Prostate gland (tissue), 2 donors: ENCODE measurements at regions of chr2 and their contacts with region 1.

Region 1: DNA sequence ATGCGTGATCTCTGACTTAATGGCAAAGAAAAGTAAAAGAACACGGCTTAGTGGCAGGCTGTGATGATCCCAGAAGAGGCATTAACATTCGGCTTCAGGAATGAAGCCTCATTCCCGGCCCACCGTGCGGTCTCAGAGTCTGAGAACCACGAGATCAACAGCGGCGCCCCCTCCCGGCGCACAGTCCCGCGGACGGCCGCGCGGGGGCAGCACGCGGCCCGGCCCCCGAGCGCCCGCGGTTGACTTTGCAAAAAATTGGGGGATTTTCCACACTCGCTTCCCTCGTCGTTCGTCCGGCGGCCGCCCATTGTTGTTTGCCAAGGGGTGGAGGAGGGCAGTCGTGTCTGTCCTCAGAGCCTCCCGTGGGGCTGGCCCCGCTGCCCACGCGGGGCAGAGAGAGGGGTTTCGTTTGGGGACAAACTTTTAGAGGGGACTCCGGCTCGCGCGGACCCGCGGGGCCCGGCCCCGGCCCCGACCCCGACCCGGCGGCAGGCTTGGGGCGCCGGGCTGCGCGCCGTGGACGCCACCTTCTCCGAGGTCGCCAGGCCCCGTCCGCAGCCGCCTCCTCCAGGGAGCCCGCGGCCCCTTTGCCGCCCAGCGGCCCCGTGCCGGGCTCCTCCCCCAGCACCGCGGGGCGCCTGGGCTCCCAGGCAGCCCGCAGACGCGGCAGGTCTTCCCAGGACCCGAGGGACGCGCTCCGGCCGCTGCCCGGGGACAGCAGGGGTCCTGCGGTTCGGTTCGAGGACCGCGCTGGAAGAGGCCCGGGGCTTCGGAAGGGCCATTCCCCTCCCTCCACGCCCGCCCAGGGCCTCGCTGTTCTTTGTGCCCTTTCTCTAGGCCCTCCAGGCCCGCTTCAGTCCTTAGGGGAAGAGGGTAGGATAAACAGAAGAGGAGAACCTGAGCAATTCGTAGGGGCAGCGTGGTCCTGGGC is 3.4 kb upstream of the HS6ST1 start:
- DNase-seq: peak; percentile 81
- H3K4me3 ChIP-seq: peak overlapping the region; percentile 45 to 51
- H3K27ac ChIP-seq: peak overlapping the region; percentile 75 to 83
- H3K4me1 ChIP-seq: peaks cover 6% of the 10 kb centered on the region
- H3K27me3 ChIP-seq: no peaks in the 10 kb centered on the region
- CTCF ChIP-seq: peak; percentile 98 to 99 (median 99)
- POLR2A ChIP-seq: peak; percentile 49

Region 2: DNA sequence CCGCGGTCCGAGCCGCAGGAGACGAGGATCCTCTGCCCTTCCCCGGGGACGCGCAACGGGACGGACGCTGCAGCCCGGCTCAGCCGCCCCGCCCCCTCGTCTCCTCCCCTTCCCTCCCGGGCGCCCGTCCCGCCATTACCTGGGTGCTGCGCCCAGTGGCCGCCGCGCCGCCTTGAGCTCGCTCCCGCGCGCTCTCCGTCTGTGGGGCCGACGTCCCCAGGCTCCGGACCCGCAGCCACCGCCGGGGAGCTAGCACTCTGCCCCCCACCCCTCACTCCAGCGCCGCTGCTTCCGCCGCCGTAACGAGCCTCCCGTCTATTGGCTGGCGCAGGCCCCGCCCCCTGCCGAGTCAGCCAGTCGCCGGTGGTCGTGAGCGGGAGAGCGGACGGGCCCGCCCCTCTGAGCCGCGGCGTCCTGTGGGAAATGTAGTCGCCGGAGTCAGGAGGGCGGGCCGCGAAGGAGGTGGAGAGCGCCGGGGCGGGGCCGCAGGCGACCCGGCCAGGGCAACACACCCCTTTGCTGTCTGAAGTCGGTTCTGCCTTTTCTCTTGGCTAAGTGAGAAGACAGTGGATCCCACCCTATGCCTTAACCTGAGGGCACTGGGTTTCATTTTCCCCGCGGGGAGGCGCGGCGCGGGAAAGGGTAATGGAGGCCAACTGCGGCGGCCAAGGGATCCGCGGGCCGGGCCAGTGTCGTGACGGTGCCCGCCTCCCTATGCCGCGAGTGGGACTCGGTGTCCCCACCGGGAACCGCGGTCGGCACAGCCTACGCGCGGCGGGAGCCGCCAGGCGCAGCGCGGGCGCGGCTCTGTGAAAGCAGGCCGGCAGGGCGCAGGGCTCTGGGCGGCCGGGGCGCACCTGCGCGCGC is 294.0 kb before region 1 on chr2 and contains the start of gene SAP130:
- intact Hi-C with region 1: loop called (anchors 5 kb)
- DNase-seq: peak; percentile 98
- H3K4me3 ChIP-seq: peak within 1 kb of the TSS; percentile 98 to 100
- H3K27ac ChIP-seq: peak within 1 kb of the TSS; percentile 98 to 99
- H3K4me1 ChIP-seq: no peaks in the 10 kb centered on the region
- H3K27me3 ChIP-seq: no peaks in the 10 kb centered on the region
- CTCF ChIP-seq: peak in 1 of 4 experiments; percentile 7
- POLR2A ChIP-seq: peak; percentile 60
- total RNA-seq, gene SAP130: 21.9 to 55.4 TPM

Region 3: GRCh38 chr2:128379021-128380015 is 57.3 kb after region 1 on chr2:
- intact Hi-C with region 1: loop called (anchors 2 kb)
- DNase-seq: peak; percentile 82
- H3K4me3 ChIP-seq: no peak overlapping the region
- H3K27ac ChIP-seq: peak overlapping the region; percentile 38 to 70
- H3K4me1 ChIP-seq: peaks cover 25% of the 10 kb centered on the region
- H3K27me3 ChIP-seq: no peaks in the 10 kb centered on the region
- CTCF ChIP-seq: no peak
- POLR2A ChIP-seq: no peak

Region 4: DNA sequence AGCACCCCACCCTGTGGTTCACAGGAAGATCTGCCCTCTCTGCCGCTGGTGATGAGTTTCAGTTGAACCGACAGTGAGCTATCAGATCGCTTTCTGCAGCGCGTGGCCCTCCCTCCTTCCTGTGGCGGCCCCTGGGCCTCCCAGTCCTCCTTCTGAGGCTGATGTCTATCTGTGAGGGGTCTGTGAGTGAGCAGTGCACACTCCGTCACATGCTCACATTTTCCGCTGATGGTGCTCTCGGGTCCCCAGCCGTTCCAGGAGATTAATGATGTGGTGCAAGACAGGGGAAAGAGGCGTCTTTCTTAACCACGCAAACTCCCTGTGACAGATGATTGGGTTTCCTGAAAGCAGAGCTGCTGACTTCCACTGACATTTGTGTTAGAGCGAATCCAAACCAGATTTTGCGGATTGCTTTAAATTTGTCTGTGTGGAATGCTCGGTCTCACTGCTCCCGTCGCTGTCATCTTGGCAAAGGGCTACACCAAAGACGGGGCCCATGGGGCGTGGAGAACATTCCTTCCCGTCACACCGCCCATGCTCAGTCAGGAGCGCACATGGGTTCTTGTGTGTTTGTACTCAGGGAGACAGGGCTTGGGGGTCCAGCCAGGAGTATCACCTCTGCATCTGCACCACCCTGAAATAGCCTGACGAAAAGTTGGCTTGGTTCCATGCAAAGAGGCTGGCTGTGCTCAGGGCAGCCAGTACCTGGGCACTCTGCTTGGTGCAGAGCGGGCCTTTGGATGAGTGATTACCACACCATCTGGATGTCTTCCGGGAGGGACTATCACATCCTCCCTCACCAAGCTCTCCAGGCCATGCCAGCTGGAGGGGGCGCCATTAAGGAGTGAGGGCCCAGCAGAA is 151.4 kb after region 1 on chr2:
- intact Hi-C with region 1: loop called (anchors 5 kb)
- DNase-seq: peak; percentile 42
- H3K4me3 ChIP-seq: no peak overlapping the region
- H3K27ac ChIP-seq: no peak overlapping the region
- H3K4me1 ChIP-seq: no peaks in the 10 kb centered on the region
- H3K27me3 ChIP-seq: no peaks in the 10 kb centered on the region
- CTCF ChIP-seq: no peak
- POLR2A ChIP-seq: no peak

Region 5: DNA sequence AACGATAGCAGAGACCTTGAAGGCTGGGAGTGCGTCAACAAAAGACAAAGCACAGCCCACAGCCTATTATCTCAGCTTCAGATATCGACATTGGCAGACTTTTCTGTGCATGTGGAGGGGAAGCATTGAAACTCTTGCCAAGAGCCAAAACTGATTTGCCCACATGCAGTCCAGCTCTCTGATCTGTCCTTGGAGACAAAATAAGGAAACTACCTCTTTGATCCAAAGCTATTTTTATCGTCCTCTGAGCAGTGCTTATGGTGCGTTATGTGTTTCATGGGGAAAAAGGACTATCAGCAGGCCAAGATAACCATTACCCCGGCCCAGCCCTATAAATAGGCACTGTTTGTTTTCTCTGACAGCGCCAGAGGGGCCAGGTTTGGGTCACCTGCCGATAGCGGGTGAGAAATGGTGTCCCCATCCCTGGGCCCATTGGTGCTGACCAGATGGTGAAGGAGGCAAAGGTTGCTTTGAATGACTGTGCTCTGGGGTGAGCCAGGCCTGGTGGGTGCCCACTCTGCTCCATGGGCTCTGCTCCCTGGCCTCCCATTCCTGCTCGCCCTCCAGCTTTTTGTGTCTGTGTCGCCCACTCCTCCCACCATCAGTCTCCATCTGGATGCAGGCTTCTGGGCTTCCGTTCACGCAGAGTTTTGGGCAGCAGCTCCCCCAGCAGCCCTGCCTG is 172.7 kb after region 1 on chr2:
- intact Hi-C with region 1: no loop called
- DNase-seq: no peak
- H3K4me3 ChIP-seq: no peak overlapping the region
- H3K27ac ChIP-seq: no peak overlapping the region
- H3K4me1 ChIP-seq: no peaks in the 10 kb centered on the region
- H3K27me3 ChIP-seq: no peaks in the 10 kb centered on the region
- CTCF ChIP-seq: no peak
- POLR2A ChIP-seq: no peak

Region 6: DNA sequence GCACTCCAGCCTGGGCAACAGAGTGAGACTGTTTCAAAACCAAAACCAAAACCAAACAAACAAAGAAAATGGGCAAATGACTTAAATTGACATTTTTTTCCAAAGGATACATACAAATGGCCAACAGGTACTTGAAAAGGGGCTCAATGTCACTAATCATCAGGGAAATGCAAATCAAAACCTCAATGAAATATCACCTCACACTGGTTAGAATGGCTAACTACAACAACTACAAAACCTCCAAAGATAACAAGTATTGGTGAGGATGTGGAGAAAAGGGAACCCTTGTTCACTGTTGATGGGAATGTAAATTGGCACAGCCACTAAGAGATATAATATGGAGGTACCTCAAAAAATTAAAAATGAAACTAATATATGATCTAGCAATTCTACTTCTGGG is 209.8 kb after region 1 on chr2:
- intact Hi-C with region 1: loop called (anchors 5 kb)
- DNase-seq: no peak
- H3K4me3 ChIP-seq: no peak overlapping the region
- H3K27ac ChIP-seq: no peak overlapping the region
- H3K4me1 ChIP-seq: no peaks in the 10 kb centered on the region
- H3K27me3 ChIP-seq: no peaks in the 10 kb centered on the region
- CTCF ChIP-seq: peak in 2 of 4 experiments; percentile 36 to 41
- POLR2A ChIP-seq: no peak

Region 7: GRCh38 chr2:128736689-128737545 is 414.9 kb after region 1 on chr2:
- intact Hi-C with region 1: loop called (anchors 10 kb)
- DNase-seq: peak; percentile 71
- H3K4me3 ChIP-seq: peak overlapping the region; percentile 6 to 21
- H3K27ac ChIP-seq: no peak overlapping the region
- H3K4me1 ChIP-seq: peaks cover 6% of the 10 kb centered on the region
- H3K27me3 ChIP-seq: no peaks in the 10 kb centered on the region
- CTCF ChIP-seq: peak; percentile 92 to 95 (median 94)
- POLR2A ChIP-seq: no peak

Region 8: DNA sequence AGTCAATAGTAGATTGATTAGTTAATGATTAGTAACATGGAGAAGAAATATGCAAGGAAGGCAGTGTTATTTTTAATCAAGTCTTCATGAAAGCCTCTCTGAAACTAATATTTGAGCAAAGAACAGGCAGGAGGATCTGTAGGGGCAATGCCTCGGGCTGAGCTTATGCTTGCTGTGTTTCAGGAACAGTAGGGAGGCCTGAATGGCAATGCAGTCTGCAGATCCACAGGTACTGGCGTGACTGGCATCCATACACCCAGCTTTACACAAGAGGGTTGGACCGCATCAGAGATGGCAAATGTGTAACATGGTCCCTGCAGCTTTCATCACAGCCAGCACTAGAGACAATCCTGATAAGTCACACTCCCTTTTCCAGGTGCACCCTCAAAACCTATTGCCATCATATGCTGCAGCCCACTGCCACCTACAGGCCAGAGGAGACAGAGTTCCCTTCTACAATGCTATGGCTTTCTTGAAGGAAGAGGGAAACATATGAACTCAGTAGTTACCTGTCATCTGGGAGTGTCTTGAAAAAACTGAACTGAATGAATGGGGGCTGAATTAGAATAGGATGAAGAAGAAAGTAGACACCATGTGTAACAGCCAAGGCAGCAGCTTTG is 1075.0 kb after region 1 on chr2:
- intact Hi-C with region 1: loop called (anchors 10 kb)
- DNase-seq: peak; percentile 61
- H3K4me3 ChIP-seq: no peak overlapping the region
- H3K27ac ChIP-seq: no peak overlapping the region
- H3K4me1 ChIP-seq: no peaks in the 10 kb centered on the region
- H3K27me3 ChIP-seq: no peaks in the 10 kb centered on the region
- CTCF ChIP-seq: peak; percentile 14 to 76 (median 62)
- POLR2A ChIP-seq: no peak